ENCODE measurements at regions of chr11 and their contacts with region 1.

Region 1: DNA sequence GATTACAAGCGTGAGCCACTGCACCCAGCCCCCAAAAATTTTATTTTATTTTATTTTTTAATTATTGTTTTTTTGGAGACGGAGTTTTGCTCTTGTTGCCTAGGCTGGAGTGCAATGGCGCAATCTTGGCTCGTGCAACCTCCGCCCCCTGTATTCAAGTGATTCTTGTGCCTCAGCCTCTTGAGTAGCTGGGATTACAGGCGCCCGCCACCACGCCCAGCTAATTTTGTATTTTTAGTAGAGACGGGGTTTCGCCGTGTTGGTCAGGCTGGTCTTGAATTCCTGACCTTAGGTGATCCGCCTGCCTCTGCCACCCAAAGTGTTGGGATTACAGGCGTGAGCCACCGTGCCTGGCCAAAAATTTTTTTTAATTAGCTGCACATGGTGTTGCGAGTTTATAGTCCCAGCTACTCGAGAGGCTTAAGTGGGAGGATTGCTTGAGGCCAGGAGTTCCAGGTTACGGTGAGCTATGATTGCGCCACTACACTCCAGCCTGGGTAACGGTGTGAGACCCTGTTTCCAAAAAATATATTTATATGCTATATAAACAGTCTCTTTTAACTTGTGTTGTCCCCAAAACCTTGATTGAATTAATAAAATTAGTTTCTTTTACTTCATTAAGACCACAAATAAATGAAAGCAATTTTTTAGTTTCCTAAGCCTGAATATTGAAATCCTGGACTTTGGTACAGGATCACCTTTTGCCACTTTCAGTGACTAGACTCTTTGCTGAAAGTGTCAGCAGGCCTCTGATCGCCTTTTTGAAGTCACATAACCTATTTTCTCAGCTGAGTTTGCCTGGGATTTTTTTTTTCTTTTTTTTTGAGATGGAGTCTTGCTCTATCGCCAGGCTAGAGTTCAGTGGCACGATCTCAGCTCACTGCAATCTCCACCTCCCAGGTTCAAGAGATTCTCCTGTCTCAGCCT is 16.2 kb downstream of the ATG13 start:
- DNase-seq: no peak
- ATAC-seq: no peak
- H3K4me3 ChIP-seq: no peak overlapping the region
- H3K27ac ChIP-seq: no peak overlapping the region
- H3K4me1 ChIP-seq: no peaks in the 10 kb centered on the region
- CTCF ChIP-seq: no peak
- EP300 ChIP-seq: no peak
- POLR2A ChIP-seq: no peak
- RAD21 ChIP-seq: no peak

Region 2: DNA sequence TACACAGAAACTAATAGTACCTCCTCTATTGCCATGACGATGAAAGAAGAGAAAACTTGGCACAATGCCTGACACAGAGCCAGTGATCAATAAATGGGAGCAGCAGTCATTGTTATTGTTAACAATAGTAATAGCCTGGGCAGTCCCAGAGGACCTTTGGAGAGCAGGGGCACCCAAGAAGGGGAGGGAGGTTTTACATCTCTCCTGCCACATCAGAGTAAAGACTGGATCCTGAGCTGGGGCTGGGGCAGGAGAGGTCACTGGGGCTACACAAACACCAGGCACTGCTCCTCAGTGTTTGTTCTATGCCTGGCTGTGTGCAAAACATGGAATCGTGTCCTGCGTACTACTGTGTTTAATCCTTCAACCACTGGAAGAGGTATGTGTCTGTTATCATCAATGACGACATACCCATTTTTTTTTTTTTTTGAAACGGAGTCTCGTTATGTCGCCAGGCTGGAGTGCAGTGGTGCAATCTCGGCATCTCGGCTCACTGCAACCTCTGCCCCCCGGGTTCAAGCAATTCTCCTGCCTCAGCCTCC is 381.1 kb before region 1 on chr11:
- CTCF ChIA-PET with region 1: no interaction called
- POLR2A ChIA-PET with region 1: no interaction called
- DNase-seq: no peak
- ATAC-seq: no peak
- H3K4me3 ChIP-seq: no peak overlapping the region
- H3K27ac ChIP-seq: no peak overlapping the region
- H3K4me1 ChIP-seq: peaks cover 35% of the 10 kb centered on the region
- CTCF ChIP-seq: no peak
- EP300 ChIP-seq: no peak
- POLR2A ChIP-seq: no peak
- RAD21 ChIP-seq: no peak

Region 3: GRCh38 chr11:46308631-46309419 is 324.7 kb before region 1 on chr11:
- CTCF ChIA-PET with region 1: no interaction called
- POLR2A ChIA-PET with region 1: no interaction called
- DNase-seq: peak; percentile 80 to 91
- ATAC-seq: peak; percentile 90 to 95
- H3K4me3 ChIP-seq: no peak overlapping the region
- H3K27ac ChIP-seq: peak overlapping the region in 1 of 2 experiments; percentile 44; a peak in 1 of 6 replicates
- H3K4me1 ChIP-seq: peaks cover 20% of the 10 kb centered on the region
- CTCF ChIP-seq: peak; percentile 90
- EP300 ChIP-seq: no peak
- POLR2A ChIP-seq: no peak
- RAD21 ChIP-seq: peak; percentile 93 to 94

Region 4: DNA sequence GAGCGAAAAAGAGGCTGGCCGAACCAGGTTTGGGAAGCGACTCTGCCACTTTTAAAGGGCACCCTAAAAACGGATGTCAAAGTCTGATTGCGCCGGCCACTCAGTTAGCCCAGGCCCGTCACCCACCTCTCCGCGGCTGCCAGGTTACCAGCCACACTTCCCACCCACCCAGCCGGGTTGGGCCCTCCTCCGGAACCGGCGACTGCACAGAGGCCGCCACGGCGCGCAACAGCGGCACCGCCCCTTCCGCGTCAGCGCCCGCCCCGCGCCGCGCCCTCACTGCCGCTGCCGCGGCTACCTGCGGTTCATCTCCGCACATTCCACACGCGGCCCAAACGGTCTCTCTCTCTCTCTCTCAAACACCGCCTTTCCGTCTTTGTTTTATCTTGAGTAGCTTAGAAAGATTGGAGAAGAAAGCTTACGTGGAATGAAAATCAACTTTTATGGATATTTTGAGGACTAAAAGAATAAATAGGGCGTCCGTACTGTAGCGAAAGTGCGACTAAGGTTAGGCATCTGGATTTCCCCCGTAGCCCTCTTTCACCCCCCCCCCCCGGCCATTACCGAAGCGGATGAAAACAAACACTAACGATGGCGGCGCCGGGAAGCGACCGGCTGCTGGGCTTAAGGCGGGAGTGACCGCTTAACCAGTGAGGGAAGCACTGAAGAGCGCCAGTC is 16.4 kb before region 1 on chr11 and contains the starts of genes ATG13 and HARBI1:
- CTCF ChIA-PET with region 1: interaction called, 16 read pairs
- POLR2A ChIA-PET with region 1: no interaction called
- DNase-seq: peak; percentile 86 to 92
- ATAC-seq: peak; percentile 98
- H3K4me3 ChIP-seq: peak within 1 kb of the TSS; percentile 96
- H3K27ac ChIP-seq: peak within 1 kb of the TSS; percentile 96 to 99
- H3K4me1 ChIP-seq: peaks cover 18% of the 10 kb centered on the region; the same call in 2 of the 3 replicates
- CTCF ChIP-seq: no peak
- EP300 ChIP-seq: no peak; a peak in 1 of 5 replicates
- POLR2A ChIP-seq: peak; percentile 85
- RAD21 ChIP-seq: no peak
- polyA plus RNA-seq, gene ATG13: 58.6 and 75.4 TPM in 2 replicates
- polyA plus RNA-seq, gene HARBI1: 5.6 and 6.2 TPM in 2 replicates